Cardiac septum (tissue), 1 donor: ENCODE measurements at regions of chr10 and their contacts with region 1.

Region 1: GRCh38 chr10:59625721-59626522 is 83.7 kb downstream of the SLC16A9 start:
- DNase-seq: no peak

Region 2: DNA sequence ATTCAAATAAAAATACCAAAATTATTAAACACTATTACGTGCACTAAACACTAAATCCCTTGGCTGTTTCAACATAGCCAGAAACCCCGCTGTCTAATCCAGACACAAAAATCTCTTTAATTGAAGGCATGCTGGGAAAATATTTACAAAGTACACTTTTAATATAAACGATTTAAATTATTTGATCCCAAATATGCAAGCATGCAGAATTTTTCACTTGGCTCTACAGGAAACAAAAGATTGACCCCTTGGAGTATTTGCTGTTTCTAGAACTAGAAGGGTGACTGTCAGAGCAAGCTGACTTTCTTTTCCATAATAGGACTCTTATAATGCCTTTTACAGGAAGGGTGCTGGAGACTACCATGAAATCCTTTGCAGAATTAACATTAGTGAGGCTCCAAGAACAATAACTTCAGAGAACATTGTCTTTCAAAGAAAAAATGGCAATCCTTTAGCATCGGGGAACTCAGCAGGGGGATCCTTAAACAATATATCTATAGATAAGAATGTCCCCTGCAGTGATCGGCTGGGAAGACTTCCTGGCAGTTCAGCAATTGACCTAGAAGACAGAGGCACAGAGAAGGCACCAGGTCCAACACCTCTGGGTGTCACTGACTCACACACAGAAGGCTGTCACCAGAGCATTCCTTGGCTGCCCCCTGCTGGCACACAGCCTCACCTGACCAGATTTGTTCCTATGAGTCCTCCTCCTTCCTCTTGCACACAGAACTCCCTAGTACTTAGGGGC is 183.1 kb after region 1 on chr10:
- intact Hi-C with region 1: loop called (anchors 2 kb)
- DNase-seq: no peak

Region 3: DNA sequence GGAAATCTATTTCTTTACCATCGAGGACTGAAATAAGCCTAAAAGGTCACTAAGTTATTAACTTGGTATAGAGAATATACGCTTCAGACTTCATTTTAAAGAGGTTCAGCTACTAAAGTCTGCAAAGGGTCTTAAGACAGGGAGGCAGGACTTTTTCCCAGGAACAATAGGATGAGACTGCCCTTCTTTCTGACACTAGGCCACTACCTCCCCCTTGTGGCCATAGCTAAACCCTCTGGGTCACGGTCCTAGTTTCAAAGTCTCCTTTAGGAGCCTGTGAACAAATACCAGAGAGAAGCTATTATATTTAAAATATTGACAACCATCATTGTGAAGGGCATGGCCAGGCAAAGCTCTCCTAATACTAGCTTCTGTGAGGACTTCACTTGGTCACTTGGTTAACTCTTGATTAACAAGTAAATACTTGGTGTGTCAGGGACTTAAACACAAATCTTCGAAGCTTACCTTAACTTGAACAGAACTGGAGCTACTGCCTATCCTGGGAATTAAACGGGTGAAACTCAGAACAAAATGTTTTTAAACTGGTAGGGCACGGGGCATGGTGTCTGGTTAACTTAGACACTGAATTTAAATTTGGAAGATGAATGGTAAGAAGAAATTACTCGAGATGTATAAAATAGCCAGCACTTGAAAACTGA is 204.8 kb after region 1 on chr10:
- intact Hi-C with region 1: loop called (anchors 2 kb)
- DNase-seq: no peak

Region 4: DNA sequence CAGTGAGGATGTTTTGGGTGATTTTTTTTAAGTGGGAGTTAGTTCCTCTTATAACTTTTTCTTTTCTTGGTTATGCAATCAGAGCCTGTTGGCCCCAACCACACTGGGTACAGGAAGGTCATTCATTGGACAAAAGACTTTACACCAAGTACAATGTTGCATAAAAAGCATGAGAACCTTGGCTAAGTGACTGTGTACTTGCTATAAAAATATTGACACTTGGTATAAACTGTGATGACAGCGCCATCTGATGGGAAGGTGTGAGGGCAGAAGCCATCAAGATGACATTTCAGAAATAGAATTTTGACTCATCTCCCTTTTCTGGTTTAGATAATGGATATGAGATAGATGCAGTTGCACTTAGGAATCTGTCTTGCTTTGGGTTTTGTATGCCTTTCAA is 406.8 kb after region 1 on chr10:
- intact Hi-C with region 1: loop called (anchors 5 kb)
- DNase-seq: no peak